CD4-positive, alpha-beta T cell (primary cell): ENCODE measurements at regions of chr13 and their contacts with region 1.

Region 1: GRCh38 chr13:102779436-102780159 is 6.0 kb upstream of the TEX30 start:
- DNase-seq: peak in 4 of 14 experiments; percentile 8 to 68 (median 62)
- ATAC-seq: peak; percentile 71
- H3K4me3 ChIP-seq: no peak overlapping the region
- H3K4me3 Mint-ChIP-seq: peak overlapping the region; percentile 7
- H3K27ac ChIP-seq: peak overlapping the region; percentile 1 to 26
- H3K27ac Mint-ChIP-seq: peak overlapping the region; percentile 65
- H3K4me1 ChIP-seq: peaks cover 15% of the 10 kb centered on the region
- H3K4me1 Mint-ChIP-seq: peaks cover 25% of the 10 kb centered on the region
- H3K27me3 ChIP-seq: no peaks in the 10 kb centered on the region
- H3K27me3 Mint-ChIP-seq: no peaks in the 10 kb centered on the region
- CTCF ChIP-seq: no peak

Region 2: GRCh38 chr13:102763741-102764140 is 15.9 kb before region 1 on chr13:
- CTCF ChIA-PET with region 1: no interaction called
- POLR2A ChIA-PET with region 1: no interaction called
- intact Hi-C with region 1: loop called in 1 of 2 experiments (anchors 2 kb)
- DNase-seq: no peak
- ATAC-seq: no peak
- H3K4me3 ChIP-seq: no peak overlapping the region
- H3K4me3 Mint-ChIP-seq: no peak overlapping the region
- H3K27ac ChIP-seq: no peak overlapping the region
- H3K27ac Mint-ChIP-seq: no peak overlapping the region
- H3K4me1 ChIP-seq: no peaks in the 10 kb centered on the region
- H3K4me1 Mint-ChIP-seq: no peaks in the 10 kb centered on the region
- H3K27me3 ChIP-seq: no peaks in the 10 kb centered on the region
- H3K27me3 Mint-ChIP-seq: no peaks in the 10 kb centered on the region
- CTCF ChIP-seq: no peak

Region 3: GRCh38 chr13:102800145-102801041 is 20.8 kb after region 1 on chr13:
- CTCF ChIA-PET with region 1: interaction called, 3 read pairs
- POLR2A ChIA-PET with region 1: interaction called, 18 read pairs
- intact Hi-C with region 1: loop called in 1 of 2 experiments (anchors 2 kb)
- DNase-seq: peak; percentile 58 to 90 (median 75)
- ATAC-seq: peak; percentile 76
- H3K4me3 ChIP-seq: peak overlapping the region; percentile 77
- H3K4me3 Mint-ChIP-seq: peak overlapping the region; percentile 94
- H3K27ac ChIP-seq: no peak overlapping the region
- H3K27ac Mint-ChIP-seq: peak overlapping the region; percentile 66
- H3K4me1 ChIP-seq: peaks cover 31% of the 10 kb centered on the region
- H3K4me1 Mint-ChIP-seq: peaks cover 29% of the 10 kb centered on the region
- H3K27me3 ChIP-seq: peaks cover 6 to 18% of the 10 kb centered on the region in 2 experiments
- H3K27me3 Mint-ChIP-seq: peaks cover 28% of the 10 kb centered on the region
- CTCF ChIP-seq: peak; percentile 69